ENCODE measurements at regions of chr9 and their contacts with region 1.

Region 1: GRCh38 chr9:114906908-114907571 is 23.4 kb downstream of the TNFSF8 start:
- DNase-seq: peak; percentile 38
- ATAC-seq: peak; percentile 78
- H3K4me3 ChIP-seq: no peak overlapping the region
- H3K27ac ChIP-seq: no peak overlapping the region
- H3K4me1 ChIP-seq: peaks cover 13 to 20% of the 10 kb centered on the region in 2 experiments
- H3K27me3 ChIP-seq: peaks cover 15% of the 10 kb centered on the region; the same call in 1 of the 2 replicates
- CTCF ChIP-seq: peak; percentile 62 to 83 (median 65)
- POLR2A ChIP-seq: no peak
- RAD21 ChIP-seq: peak; percentile 85

Region 2: DNA sequence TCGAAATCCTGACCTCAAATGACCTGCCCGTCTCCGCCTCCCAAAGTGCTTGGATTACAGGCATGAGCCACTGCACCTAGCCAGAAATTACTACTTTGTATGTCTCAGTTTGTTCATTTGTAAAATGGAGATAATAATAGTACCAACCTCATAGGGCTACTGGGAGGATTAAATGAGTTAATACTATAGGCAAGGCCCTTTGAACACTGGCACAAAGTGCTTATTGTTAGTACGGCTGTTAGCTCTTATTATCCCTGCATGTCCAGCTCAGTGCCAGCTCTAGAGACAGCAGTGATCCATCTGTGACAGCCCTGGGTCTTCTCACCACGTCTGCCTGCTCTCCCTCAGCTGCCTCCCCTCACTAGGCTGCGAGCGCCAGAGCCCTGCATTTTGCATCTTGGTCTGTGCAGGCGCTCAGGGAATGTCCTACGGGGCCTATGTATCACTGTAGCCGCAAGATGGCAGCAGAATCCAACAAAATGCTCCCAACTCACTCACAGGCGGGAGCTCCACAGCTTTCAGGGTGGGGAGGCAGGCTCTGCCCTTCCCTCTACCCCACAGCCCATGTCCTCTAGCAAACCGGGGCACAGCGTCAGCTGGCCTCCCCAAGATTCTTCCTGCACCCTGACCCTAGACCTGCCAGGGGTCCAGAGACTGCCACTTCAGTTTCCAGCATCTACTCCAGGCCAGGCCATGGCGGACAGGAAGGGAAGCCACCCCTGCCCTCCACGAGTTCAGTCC is 501.6 kb before region 1 on chr9:
- CTCF ChIA-PET with region 1: interaction called, 7 read pairs
- POLR2A ChIA-PET with region 1: no interaction called
- RAD21 ChIA-PET with region 1: interaction called, 3 read pairs
- intact Hi-C with region 1: loop called (anchors 2 kb)
- DNase-seq: peak; percentile 48
- ATAC-seq: peak; percentile 98
- H3K4me3 ChIP-seq: no peak overlapping the region
- H3K27ac ChIP-seq: no peak overlapping the region
- H3K4me1 ChIP-seq: no peaks in the 10 kb centered on the region
- H3K27me3 ChIP-seq: no peaks in the 10 kb centered on the region
- CTCF ChIP-seq: peak; percentile 78 to 81 (median 80)
- POLR2A ChIP-seq: no peak
- RAD21 ChIP-seq: peak; percentile 93

Region 3: DNA sequence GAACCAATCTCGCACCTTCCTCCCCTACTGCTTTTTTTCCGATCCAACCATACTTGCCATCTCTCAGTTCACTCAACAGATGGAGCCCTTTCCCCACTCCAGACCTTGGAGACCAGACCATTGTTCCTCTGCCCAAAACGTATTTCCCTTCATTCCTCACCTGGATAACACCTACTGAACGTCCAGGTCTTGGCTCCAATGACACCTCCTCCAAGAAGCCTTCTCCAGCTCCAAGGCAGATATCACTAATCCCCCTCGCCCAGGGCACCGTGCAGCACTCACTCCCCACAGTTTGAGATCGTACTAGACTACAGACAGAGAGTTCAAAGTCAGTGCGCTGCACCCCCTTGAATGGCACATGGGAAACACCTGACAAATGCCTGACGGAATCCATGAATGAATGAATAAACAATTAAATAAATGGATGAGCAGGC is 472.1 kb before region 1 on chr9:
- CTCF ChIA-PET with region 1: no interaction called
- POLR2A ChIA-PET with region 1: no interaction called
- RAD21 ChIA-PET with region 1: no interaction called
- intact Hi-C with region 1: loop called (anchors 10 kb)
- DNase-seq: peak; percentile 35
- ATAC-seq: peak; percentile 93
- H3K4me3 ChIP-seq: no peak overlapping the region
- H3K27ac ChIP-seq: no peak overlapping the region
- H3K4me1 ChIP-seq: no peaks in the 10 kb centered on the region
- H3K27me3 ChIP-seq: no peaks in the 10 kb centered on the region
- CTCF ChIP-seq: peak; percentile 62 to 79 (median 70)
- POLR2A ChIP-seq: no peak
- RAD21 ChIP-seq: peak; percentile 88

Region 4: GRCh38 chr9:114662081-114662989 is 244.7 kb before region 1 on chr9:
- CTCF ChIA-PET with region 1: interaction called, 4 read pairs
- POLR2A ChIA-PET with region 1: no interaction called
- RAD21 ChIA-PET with region 1: no interaction called
- intact Hi-C with region 1: loop called (anchors 1 kb)
- DNase-seq: no peak
- ATAC-seq: peak; percentile 96
- H3K4me3 ChIP-seq: no peak overlapping the region
- H3K27ac ChIP-seq: no peak overlapping the region
- H3K4me1 ChIP-seq: no peaks in the 10 kb centered on the region
- H3K27me3 ChIP-seq: peaks cover 18% of the 10 kb centered on the region; the same call in 1 of the 2 replicates
- CTCF ChIP-seq: peak; percentile 74 to 89 (median 86)
- POLR2A ChIP-seq: no peak
- RAD21 ChIP-seq: peak; percentile 82

Region 5: GRCh38 chr9:114681594-114682332 is 225.3 kb before region 1 on chr9 and contains the start of gene TEX48:
- CTCF ChIA-PET with region 1: interaction called, 132 read pairs
- POLR2A ChIA-PET with region 1: no interaction called
- RAD21 ChIA-PET with region 1: interaction called, 5 to 6 read pairs
- intact Hi-C with region 1: loop called (anchors 1 kb)
- DNase-seq: peak; percentile 78
- ATAC-seq: peak; percentile 93
- H3K4me3 ChIP-seq: no peak within 1 kb of the TSS
- H3K27ac ChIP-seq: no peak within 1 kb of the TSS
- H3K4me1 ChIP-seq: peaks cover 13 to 22% of the 10 kb centered on the region in 2 experiments; a peak in 3 of 4 replicates
- H3K27me3 ChIP-seq: no peaks in the 10 kb centered on the region
- CTCF ChIP-seq: peak; percentile 79 to 90 (median 83)
- POLR2A ChIP-seq: no peak
- RAD21 ChIP-seq: peak; percentile 91
- total RNA-seq, gene TEX48: not detected

Region 6: GRCh38 chr9:114738581-114739316 is 168.3 kb before region 1 on chr9:
- CTCF ChIA-PET with region 1: interaction called, 49 read pairs
- POLR2A ChIA-PET with region 1: no interaction called
- RAD21 ChIA-PET with region 1: interaction called in 1 of 2 experiments, 6 read pairs
- intact Hi-C with region 1: loop called (anchors 1 kb)
- DNase-seq: peak; percentile 63
- ATAC-seq: peak; percentile 96
- H3K4me3 ChIP-seq: no peak overlapping the region
- H3K27ac ChIP-seq: no peak overlapping the region
- H3K4me1 ChIP-seq: peaks cover 0 to 5% of the 10 kb centered on the region in 2 experiments; a peak in 1 of 4 replicates
- H3K27me3 ChIP-seq: 0 out of 2 replicates have a peak, but pooled peaks cover 5% of the 10 kb centered on the region
- CTCF ChIP-seq: peak; percentile 78 to 91 (median 89)
- POLR2A ChIP-seq: no peak
- RAD21 ChIP-seq: peak; percentile 95

Region 7: DNA sequence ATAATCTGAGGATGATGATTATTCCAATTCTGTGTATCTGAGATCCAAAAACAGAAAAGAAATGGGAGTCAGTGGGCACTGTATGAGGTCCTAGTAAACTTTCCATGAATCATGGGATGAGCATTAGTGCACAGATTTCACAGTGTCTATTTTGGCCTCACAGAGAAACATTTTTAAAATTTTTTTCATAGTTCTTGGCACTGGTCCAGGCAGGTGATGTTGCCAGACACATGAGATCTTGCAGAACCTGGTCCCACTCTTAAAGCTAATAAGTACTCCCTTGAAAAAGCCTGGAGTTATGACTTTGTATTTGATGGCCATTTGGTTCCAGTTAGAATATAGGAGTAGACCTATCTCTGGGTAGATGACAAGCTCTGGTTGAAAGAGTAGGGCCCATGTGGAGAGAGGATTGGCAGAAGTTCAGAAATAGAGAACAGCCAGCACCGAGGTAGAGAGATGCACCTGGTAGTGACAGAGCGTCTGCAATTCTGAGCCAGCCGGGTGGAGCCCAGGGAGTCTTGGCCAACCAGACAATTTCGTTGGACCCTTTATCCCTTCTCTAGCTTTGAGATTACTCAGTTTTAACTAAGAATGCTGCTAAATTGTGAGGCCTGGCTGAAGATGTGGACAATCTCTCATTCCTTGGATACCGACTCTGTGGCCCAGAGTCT is 94.9 kb before region 1 on chr9:
- CTCF ChIA-PET with region 1: no interaction called
- POLR2A ChIA-PET with region 1: no interaction called
- RAD21 ChIA-PET with region 1: no interaction called
- intact Hi-C with region 1: no loop called
- DNase-seq: no peak
- ATAC-seq: no peak
- H3K4me3 ChIP-seq: no peak overlapping the region
- H3K27ac ChIP-seq: no peak overlapping the region
- H3K4me1 ChIP-seq: no peaks in the 10 kb centered on the region
- H3K27me3 ChIP-seq: peaks cover 3% of the 10 kb centered on the region; the same call in 1 of the 2 replicates
- CTCF ChIP-seq: no peak
- POLR2A ChIP-seq: no peak
- RAD21 ChIP-seq: no peak

Region 8: GRCh38 chr9:115046824-115047223 is 139.8 kb after region 1 on chr9:
- CTCF ChIA-PET with region 1: no interaction called
- POLR2A ChIA-PET with region 1: no interaction called
- RAD21 ChIA-PET with region 1: no interaction called
- intact Hi-C with region 1: no loop called
- DNase-seq: no peak
- ATAC-seq: no peak
- H3K4me3 ChIP-seq: no peak overlapping the region
- H3K27ac ChIP-seq: no peak overlapping the region
- H3K4me1 ChIP-seq: no peaks in the 10 kb centered on the region
- H3K27me3 ChIP-seq: peaks cover 12% of the 10 kb centered on the region; the same call in 1 of the 2 replicates
- CTCF ChIP-seq: no peak
- POLR2A ChIP-seq: no peak
- RAD21 ChIP-seq: no peak

Region 9: DNA sequence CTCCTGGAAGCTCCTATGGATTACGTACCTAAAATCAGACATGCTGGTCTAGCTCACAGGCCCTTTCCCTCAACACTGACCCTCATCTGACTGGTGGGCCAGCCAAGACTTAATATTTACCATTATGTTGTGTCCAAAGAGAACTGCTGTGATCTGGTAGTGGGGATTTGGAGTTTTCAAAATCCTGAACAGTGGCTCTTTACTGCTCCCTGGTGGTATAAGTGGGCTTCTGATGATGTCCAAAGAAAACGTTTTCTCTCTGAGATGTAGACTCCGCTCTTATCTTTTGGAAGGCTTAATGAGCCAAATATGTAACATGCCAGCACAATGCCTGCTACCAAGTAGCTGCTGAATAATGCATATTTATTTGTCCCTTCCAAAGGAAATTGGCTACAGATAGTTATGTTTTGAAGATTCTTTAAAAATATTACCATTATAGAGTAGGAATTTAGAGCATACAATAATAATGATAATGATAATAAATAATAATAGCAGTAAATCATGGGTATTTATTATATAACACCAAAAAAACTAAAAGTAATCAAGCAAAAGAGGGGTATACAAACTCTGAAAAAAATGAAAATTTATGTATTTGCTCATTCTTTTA is 617.5 kb after region 1 on chr9:
- CTCF ChIA-PET with region 1: no interaction called
- POLR2A ChIA-PET with region 1: no interaction called
- RAD21 ChIA-PET with region 1: no interaction called
- intact Hi-C with region 1: loop called (anchors 2 kb)
- DNase-seq: peak; percentile 47
- ATAC-seq: peak; percentile 86
- H3K4me3 ChIP-seq: no peak overlapping the region
- H3K27ac ChIP-seq: no peak overlapping the region
- H3K4me1 ChIP-seq: no peaks in the 10 kb centered on the region
- H3K27me3 ChIP-seq: 0 out of 2 replicates have a peak, but pooled peaks cover 3% of the 10 kb centered on the region
- CTCF ChIP-seq: peak; percentile 66 to 77 (median 71); a peak in 5 of 6 replicates
- POLR2A ChIP-seq: no peak
- RAD21 ChIP-seq: peak; percentile 91